ENCODE measurements at regions of chr12 and their contacts with region 1.

Region 1: GRCh38 chr12:129911428-129912049 is 7.7 kb upstream of the TMEM132D start:
- DNase-seq: peak; percentile 25 to 37
- ATAC-seq: peak; percentile 48 to 83 (median 61)
- H3K4me3 ChIP-seq: no peak overlapping the region
- H3K4me3 Mint-ChIP-seq: no peak overlapping the region
- H3K27ac ChIP-seq: no peak overlapping the region
- H3K27ac Mint-ChIP-seq: no peak overlapping the region
- H3K4me1 ChIP-seq: no peaks in the 10 kb centered on the region
- H3K4me1 Mint-ChIP-seq: no peaks in the 10 kb centered on the region
- H3K27me3 ChIP-seq: no peaks in the 10 kb centered on the region
- H3K27me3 Mint-ChIP-seq: peaks cover 6 to 15% of the 10 kb centered on the region in 2 donors
- CTCF ChIP-seq: peak; percentile 82

Region 2: GRCh38 chr12:128259556-128260070 is 1651.9 kb before region 1 on chr12:
- intact Hi-C with region 1: loop called (anchors 1 kb)
- DNase-seq: peak; percentile 7 to 18
- ATAC-seq: no peak
- H3K4me3 ChIP-seq: no peak overlapping the region
- H3K4me3 Mint-ChIP-seq: no peak overlapping the region
- H3K27ac ChIP-seq: no peak overlapping the region
- H3K27ac Mint-ChIP-seq: no peak overlapping the region
- H3K4me1 ChIP-seq: no peaks in the 10 kb centered on the region
- H3K4me1 Mint-ChIP-seq: no peaks in the 10 kb centered on the region
- H3K27me3 ChIP-seq: peaks cover 1% of the 10 kb centered on the region
- H3K27me3 Mint-ChIP-seq: peaks cover 17 to 23% of the 10 kb centered on the region in 2 donors
- CTCF ChIP-seq: peak; percentile 71

Region 3: GRCh38 chr12:128531170-128531569 is 1380.4 kb before region 1 on chr12:
- intact Hi-C with region 1: loop called (anchors 1 kb)
- DNase-seq: peak in 1 of 2 donors; percentile 9
- ATAC-seq: peak in 1 of 3 donors; percentile 40
- H3K4me3 ChIP-seq: no peak overlapping the region
- H3K4me3 Mint-ChIP-seq: no peak overlapping the region
- H3K27ac ChIP-seq: no peak overlapping the region
- H3K27ac Mint-ChIP-seq: no peak overlapping the region
- H3K4me1 ChIP-seq: no peaks in the 10 kb centered on the region
- H3K4me1 Mint-ChIP-seq: peaks cover 5 to 12% of the 10 kb centered on the region in 2 donors
- H3K27me3 ChIP-seq: no peaks in the 10 kb centered on the region
- H3K27me3 Mint-ChIP-seq: peaks cover 0 to 8% of the 10 kb centered on the region in 2 donors
- CTCF ChIP-seq: peak; percentile 25

Region 4: DNA sequence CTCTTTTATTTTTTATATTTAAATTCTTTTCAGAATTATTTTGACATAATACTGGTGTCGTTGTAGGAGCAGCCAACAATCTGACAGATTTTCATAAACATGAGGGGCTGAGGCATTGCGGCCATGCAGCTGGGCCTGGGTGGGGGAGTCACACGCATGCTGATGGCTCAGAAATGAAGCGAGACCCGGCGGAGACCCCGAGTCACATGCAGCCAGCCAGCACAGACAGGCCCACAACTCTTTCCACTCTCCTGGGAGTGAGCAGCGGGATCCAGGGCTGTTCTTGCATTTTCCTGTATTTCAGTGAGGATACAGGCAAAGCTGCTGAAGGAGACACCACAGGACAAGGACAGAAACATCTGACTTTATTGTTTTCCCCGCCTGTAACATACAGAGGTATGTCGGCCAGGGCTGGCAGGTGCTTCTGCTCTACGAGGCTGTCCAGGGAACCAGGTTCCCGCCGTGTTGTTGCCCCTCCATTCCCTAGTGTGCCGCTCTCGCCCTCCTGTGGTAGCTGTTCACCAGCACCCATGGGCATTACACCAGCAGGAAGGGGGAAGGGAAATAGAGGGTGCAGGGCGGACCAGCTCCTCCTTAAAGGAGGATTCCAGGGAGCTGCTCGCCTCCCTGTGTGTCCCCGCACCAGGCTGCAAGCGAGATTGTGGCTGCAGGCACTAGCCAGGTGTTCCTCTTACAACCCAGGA is 281.3 kb after region 1 on chr12:
- intact Hi-C with region 1: no loop called
- DNase-seq: no peak
- ATAC-seq: no peak
- H3K4me3 ChIP-seq: no peak overlapping the region
- H3K4me3 Mint-ChIP-seq: no peak overlapping the region
- H3K27ac ChIP-seq: no peak overlapping the region
- H3K27ac Mint-ChIP-seq: no peak overlapping the region
- H3K4me1 ChIP-seq: no peaks in the 10 kb centered on the region
- H3K4me1 Mint-ChIP-seq: no peaks in the 10 kb centered on the region
- H3K27me3 ChIP-seq: no peaks in the 10 kb centered on the region
- H3K27me3 Mint-ChIP-seq: no peaks in the 10 kb centered on the region
- CTCF ChIP-seq: no peak

Measured in natural killer cell (primary cell).